ENCODE measurements at regions of chr6 and their contacts with region 1.

Region 1: DNA sequence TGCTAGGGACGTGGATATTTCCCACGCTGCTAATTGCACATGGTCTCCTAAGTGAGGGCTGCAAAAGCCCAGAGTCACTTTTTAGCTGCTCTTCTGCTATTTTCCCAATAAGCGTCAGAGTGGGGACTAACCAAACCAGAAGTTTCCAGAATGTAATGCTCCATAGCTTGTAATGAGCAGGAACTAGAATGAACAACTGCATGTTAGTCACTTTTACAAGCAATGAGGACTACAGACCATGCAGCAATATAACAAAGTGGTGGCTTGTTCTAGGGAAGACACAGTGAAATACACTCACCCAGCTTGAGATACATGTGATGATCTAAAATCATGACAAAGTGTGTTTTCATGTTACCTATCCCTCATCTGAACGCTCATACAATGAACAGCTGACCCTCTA is 314.1 kb upstream of the SGK1 start:
- DNase-seq: no peak
- H3K4me3 Mint-ChIP-seq: no peak overlapping the region
- H3K27ac Mint-ChIP-seq: no peak overlapping the region
- H3K4me1 Mint-ChIP-seq: peaks cover 22% of the 10 kb centered on the region
- H3K27me3 Mint-ChIP-seq: no peaks in the 10 kb centered on the region

Region 2: GRCh38 chr6:133906050-133906449 is 726.0 kb before region 1 on chr6:
- CTCF ChIA-PET with region 1: no interaction called
- intact Hi-C with region 1: no loop called
- DNase-seq: no peak
- H3K4me3 Mint-ChIP-seq: no peak overlapping the region
- H3K27ac Mint-ChIP-seq: no peak overlapping the region
- H3K4me1 Mint-ChIP-seq: no peaks in the 10 kb centered on the region
- H3K27me3 Mint-ChIP-seq: peaks cover 36% of the 10 kb centered on the region

Region 3: GRCh38 chr6:134621858-134622257 is 10.2 kb before region 1 on chr6:
- CTCF ChIA-PET with region 1: interaction called, 3 read pairs
- intact Hi-C with region 1: loop called (anchors 1 kb)
- DNase-seq: peak; percentile 39
- H3K4me3 Mint-ChIP-seq: no peak overlapping the region
- H3K27ac Mint-ChIP-seq: no peak overlapping the region
- H3K4me1 Mint-ChIP-seq: peaks cover 12% of the 10 kb centered on the region
- H3K27me3 Mint-ChIP-seq: no peaks in the 10 kb centered on the region

Measured in activated naive CD4-positive, alpha-beta T cell treated with anti-CD3 and anti-CD28 coated beads for 36 hours (primary cell).